Right ventricle myocardium inferior (tissue), 1 donor: ENCODE measurements at regions of chr1 and their contacts with region 1.

Region 1: DNA sequence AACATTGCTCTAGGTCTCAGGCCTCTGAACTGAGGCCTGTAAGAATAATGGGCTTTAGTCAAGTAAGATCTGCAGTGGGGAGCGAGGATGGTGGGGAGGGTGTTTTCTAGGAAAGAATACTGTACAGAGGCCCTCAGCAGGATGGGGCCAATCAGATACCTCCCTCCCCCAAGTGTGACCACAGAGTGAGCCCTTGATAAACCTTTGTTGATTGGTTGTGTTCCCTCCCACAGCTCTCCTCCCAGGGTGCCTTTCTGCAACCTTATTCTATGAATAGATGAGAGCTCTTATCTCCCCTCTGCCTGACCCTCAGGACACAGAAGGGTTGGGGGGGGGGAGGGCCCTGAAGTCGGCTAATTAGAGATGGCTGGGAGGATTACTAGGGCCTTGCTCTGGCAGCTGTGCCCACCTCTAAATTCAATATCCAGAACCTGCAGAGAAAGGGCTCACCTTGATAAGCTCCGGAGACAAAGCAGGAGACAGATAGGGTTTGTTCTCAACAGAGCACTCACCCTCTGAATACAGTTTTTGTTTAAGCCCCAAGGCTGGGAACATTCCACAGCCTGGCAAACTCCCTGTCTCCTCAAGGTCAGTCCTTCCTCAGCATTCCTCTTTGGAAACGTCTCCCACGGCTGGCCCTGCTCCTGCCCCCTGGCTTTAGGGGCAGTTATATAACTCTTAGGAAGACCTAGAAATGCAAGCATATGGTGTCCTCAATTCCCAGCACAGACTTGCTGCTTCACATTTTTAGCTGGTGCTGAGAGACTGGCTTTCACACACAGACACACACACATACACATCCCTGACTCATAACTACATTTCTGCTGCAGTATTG is 42.9 kb downstream of the ATP1A1 start:
- DNase-seq: no peak
- ATAC-seq: peak; percentile 88

Region 2: DNA sequence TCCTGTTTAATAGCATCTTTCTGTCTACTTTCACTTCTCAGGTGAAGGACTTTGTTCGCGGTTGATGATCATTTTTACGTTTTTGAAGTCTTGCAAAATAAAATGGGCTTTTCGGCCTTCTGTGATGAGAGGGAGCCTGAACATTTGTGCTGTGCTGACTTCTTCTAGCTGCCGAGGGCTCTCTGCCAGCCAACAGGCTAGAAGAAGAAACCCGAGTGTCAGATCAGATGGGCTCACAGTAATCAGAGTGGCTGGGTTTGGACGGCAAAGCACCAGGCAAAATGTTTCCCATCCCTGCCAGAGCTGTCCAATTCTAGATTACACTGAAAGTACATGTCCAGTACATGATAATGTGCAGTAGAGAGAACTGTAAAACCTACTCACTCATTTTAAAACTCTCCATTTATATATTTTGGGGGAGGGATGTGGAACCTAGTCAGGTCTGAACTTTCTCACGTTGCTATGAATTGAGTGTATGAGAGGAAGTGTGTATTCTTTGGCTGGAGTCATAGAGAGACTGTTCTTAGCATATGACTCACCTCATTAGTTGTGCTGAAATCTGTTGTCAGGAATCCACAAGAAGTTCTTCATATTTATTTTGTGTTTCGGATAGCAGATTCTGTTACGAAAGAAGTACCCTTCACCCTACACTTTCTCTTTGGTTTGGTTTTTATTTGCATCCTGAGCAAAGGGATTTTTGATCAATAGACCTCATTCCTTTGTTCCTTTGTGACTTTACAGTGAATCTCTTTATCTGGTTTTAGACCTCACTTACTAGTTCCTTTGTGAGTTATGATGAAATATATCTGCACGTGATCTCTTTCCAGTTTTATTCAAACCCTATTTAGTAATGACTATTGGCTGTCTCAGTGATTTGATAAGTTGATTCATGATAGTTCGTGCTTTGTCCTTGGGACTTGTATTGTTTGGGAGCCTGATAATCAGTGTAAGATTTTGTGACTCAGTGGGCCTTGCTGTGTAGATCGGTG is 38.1 kb before region 1 on chr1:
- intact Hi-C with region 1: loop called (anchors 2 kb)
- DNase-seq: peak; percentile 87
- ATAC-seq: peak; percentile 52

Region 3: GRCh38 chr1:116433275-116434257 is 17.6 kb after region 1 on chr1:
- intact Hi-C with region 1: loop called (anchors 1 kb)
- DNase-seq: peak; percentile 80
- ATAC-seq: peak; percentile 90

Region 4: GRCh38 chr1:117301901-117302300 is 886.0 kb after region 1 on chr1:
- intact Hi-C with region 1: no loop called
- DNase-seq: no peak
- ATAC-seq: no peak